Activated T-helper 2 cell treated with anti-CD3 and anti-CD28 coated beads, Interferon-gamma antibody, Interleukin-2, Interleukin-4, amounts not matched to agents 10 μg/mL and 5 μg/mL and 100 μg/mL, durations not matched to agents 14 hours and 24 hours and 36 hours (primary cell): ENCODE measurements at regions of chr11 and their contacts with region 1.

Region 1: GRCh38 chr11:36564376-36565030 is 3.3 kb upstream of the RAG1 start:
- DNase-seq: peak; percentile 20
- H3K4me3 Mint-ChIP-seq: peak overlapping the region; percentile 53
- H3K27ac Mint-ChIP-seq: no peak overlapping the region
- H3K4me1 Mint-ChIP-seq: peaks cover 11% of the 10 kb centered on the region
- H3K27me3 Mint-ChIP-seq: peaks cover 62% of the 10 kb centered on the region

Region 2: DNA sequence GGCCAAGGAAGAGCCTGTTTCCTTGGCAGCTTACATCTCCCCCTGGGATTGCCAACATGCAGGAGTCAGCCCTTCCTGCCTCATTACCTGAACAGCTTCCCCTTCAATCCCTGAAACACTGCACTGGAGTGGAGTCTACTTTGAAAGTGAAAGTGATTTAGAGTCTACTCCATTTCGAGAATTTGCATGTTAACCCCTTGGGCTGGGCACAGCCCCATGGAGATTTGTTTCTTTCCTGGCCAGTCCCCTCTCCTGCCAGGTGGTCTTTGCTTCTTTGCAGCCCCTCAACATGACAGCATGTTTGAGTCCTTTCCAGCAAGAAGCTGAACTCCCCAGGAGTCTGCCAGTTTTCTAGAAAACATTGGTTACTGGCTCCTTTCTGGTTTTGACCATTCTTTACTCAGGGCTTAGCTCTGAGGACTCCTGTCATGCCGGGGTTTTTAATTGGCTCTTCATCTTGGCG is 114.4 kb before region 1 on chr11:
- intact Hi-C with region 1: no loop called
- DNase-seq: no peak
- H3K4me3 Mint-ChIP-seq: no peak overlapping the region
- H3K27ac Mint-ChIP-seq: no peak overlapping the region
- H3K4me1 Mint-ChIP-seq: peaks cover 48% of the 10 kb centered on the region
- H3K27me3 Mint-ChIP-seq: peaks cover 19% of the 10 kb centered on the region

Region 3: GRCh38 chr11:36605221-36606216 is 41.0 kb after region 1 on chr11:
- intact Hi-C with region 1: no loop called
- DNase-seq: no peak
- H3K4me3 Mint-ChIP-seq: no peak overlapping the region
- H3K27ac Mint-ChIP-seq: no peak overlapping the region
- H3K4me1 Mint-ChIP-seq: peaks cover 5% of the 10 kb centered on the region
- H3K27me3 Mint-ChIP-seq: peaks cover 24% of the 10 kb centered on the region

Region 4: GRCh38 chr11:36622431-36623136 is 58.1 kb after region 1 on chr11:
- intact Hi-C with region 1: loop called (anchors 1 kb)
- DNase-seq: no peak
- H3K4me3 Mint-ChIP-seq: no peak overlapping the region
- H3K27ac Mint-ChIP-seq: no peak overlapping the region
- H3K4me1 Mint-ChIP-seq: no peaks in the 10 kb centered on the region
- H3K27me3 Mint-ChIP-seq: peaks cover 15% of the 10 kb centered on the region

Region 5: DNA sequence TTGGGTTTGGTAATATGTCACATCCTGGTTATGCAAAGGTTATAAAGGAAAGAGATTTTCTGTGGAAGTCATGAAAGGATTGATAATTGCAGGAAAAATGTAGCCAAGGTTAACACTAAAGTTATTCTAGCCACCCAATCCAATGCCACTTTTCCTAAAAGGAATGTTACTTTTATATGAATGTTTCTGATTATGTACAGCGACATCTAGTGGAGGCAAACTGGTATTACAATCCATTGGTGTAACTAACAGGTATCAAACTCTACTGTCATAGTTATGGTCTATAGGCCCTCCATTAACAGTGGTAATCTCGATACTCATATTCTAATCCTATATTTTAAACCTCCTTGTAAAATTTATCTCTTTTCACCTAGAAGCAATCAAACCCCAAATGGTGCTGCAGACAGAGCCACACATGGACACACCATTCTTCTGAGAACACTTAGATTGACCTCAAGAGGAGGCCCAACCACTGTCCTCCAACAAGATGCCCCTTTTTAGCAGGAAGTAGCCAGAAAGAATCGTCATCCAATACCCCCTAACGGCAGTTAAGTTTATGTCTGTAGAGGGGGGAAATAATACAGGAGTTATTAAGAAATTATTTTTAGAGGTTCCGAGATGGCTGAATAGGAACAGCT is 108.4 kb after region 1 on chr11:
- intact Hi-C with region 1: loop called (anchors 1 kb)
- DNase-seq: no peak
- H3K4me3 Mint-ChIP-seq: no peak overlapping the region
- H3K27ac Mint-ChIP-seq: no peak overlapping the region
- H3K4me1 Mint-ChIP-seq: no peaks in the 10 kb centered on the region
- H3K27me3 Mint-ChIP-seq: no peaks in the 10 kb centered on the region

Region 6: GRCh38 chr11:36746886-36747710 is 182.6 kb after region 1 on chr11:
- intact Hi-C with region 1: loop called (anchors 1 kb)
- DNase-seq: peak; percentile 80
- H3K4me3 Mint-ChIP-seq: no peak overlapping the region
- H3K27ac Mint-ChIP-seq: no peak overlapping the region
- H3K4me1 Mint-ChIP-seq: peaks cover 6% of the 10 kb centered on the region
- H3K27me3 Mint-ChIP-seq: peaks cover 12% of the 10 kb centered on the region